ENCODE measurements at regions of chr3 and their contacts with region 1.

Region 1: DNA sequence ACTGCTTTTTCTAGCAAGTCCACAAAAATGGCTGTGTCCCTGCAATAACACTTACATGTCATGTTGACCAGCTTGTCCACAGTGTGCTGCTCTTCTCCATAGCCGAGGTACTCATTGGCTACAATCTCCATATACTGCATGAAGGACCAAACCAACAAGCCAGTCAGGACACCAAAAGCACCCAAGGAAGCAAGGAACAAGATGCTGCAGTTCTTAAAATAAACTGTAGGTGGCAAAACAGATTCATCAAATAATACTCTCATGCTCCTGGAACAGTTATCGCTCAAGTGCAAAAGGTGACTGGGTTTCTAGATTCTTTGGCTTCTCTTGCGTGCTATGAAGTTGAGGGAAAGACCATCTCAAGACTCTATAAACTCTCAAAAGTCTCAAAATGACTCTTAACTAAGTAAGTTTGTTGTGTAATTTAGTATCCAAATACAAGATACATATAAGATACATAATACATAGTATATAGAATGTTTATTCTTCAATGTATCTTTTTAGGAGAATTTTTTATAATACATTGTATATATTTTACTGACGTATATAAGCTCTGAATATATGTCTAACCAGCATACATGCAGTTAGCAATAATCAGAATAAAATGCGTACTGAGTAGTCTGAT is 57.0 kb downstream of the NEK10 start:
- DNase-seq: peak in 1 of 3 donors; percentile 44
- ATAC-seq: peak; percentile 86
- H3K4me3 ChIP-seq: no peak overlapping the region
- H3K4me1 ChIP-seq: no peaks in the 10 kb centered on the region
- CTCF ChIP-seq: peak; percentile 54

Region 2: DNA sequence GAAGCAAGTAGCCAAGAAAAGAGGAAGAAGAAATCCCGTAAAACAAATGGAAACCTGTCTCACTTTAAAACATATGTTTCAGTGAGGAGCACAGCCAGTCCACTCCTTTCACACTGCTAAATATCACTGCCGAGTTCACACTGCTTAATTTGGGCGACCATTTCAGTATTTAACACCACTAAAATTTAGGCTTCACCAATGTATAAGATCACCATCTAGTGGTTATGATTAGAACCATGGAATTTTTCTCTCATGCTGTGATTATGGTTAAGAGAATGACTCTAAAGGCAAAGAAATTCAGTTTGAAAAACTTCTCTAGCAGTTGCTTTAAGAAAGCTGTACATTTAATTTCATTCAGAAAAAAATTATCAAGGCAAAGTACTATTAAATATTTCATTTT is 155.4 kb after region 1 on chr3:
- intact Hi-C with region 1: loop called in 1 of 2 experiments (anchors 10 kb)
- DNase-seq: no peak
- ATAC-seq: peak; percentile 78
- H3K4me3 ChIP-seq: no peak overlapping the region
- H3K4me1 ChIP-seq: no peaks in the 10 kb centered on the region
- CTCF ChIP-seq: no peak

Region 3: GRCh38 chr3:27681245-27681748 is 369.1 kb after region 1 on chr3:
- intact Hi-C with region 1: loop called in 1 of 2 experiments (anchors 10 kb)
- DNase-seq: peak in 1 of 3 donors; percentile 37
- ATAC-seq: peak; percentile 87
- H3K4me3 ChIP-seq: no peak overlapping the region
- H3K4me1 ChIP-seq: no peaks in the 10 kb centered on the region
- CTCF ChIP-seq: peak; percentile 41